Caco-2 (cell line): ENCODE measurements at regions of chr6 and their contacts with region 1.

Region 1: DNA sequence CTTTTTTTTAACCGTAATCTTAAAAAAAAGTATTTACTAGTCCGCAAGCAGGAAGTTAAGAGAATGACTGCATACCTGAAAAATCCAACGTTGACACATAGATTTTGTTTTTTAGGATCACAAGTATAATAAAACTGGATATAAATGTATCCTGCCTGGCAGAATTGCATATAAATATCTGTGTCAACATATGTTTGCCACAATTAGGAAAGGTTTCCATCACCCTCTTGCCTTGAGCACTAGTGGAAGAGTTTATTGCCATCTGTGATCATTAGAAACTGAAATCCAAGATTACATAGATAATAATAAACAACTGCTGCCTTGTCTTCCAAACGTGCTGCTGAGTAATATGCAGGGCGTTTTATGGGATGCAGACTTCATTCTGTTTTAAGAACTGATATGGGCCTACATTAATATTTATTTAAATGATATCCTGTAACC is 27.9 kb downstream of the PLEKHG1 start:
- DNase-seq: no peak
- H3K4me3 ChIP-seq: no peak overlapping the region
- H3K4me3 Mint-ChIP-seq: no peak overlapping the region
- H3K27ac Mint-ChIP-seq: peak overlapping the region; percentile 77
- H3K4me1 ChIP-seq: peaks cover 47% of the 10 kb centered on the region
- H3K4me1 Mint-ChIP-seq: peaks cover 41% of the 10 kb centered on the region
- H3K27me3 ChIP-seq: no peaks in the 10 kb centered on the region
- H3K27me3 Mint-ChIP-seq: no peaks in the 10 kb centered on the region
- CTCF ChIP-seq: no peak

Region 2: DNA sequence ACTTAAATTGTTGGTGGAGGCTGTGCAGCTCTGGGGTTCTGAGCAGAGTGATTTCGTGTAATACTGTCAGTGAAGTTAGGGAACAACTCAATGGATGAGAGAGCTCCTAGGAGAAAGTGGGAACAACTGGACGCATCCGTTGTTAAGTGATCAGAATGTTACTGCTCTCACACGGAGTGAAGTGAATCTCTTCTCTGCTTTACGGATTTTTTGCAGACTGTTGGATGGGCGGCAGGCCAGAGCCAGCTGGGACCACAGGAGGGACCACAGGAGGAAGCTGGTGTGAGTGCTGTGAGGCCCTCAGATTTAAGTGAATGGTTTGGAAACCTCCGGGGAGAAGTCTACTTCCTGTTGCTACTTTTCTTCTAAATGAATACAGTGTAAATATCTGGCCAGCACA is 508.4 kb before region 1 on chr6:
- CTCF ChIA-PET with region 1: no interaction called
- POLR2A ChIA-PET with region 1: no interaction called
- intact Hi-C with region 1: no loop called
- DNase-seq: no peak
- H3K4me3 ChIP-seq: no peak overlapping the region
- H3K4me3 Mint-ChIP-seq: no peak overlapping the region
- H3K27ac Mint-ChIP-seq: peak overlapping the region; percentile 73
- H3K4me1 ChIP-seq: peaks cover 16% of the 10 kb centered on the region; the same call in 1 of the 2 replicates
- H3K4me1 Mint-ChIP-seq: peaks cover 11% of the 10 kb centered on the region
- H3K27me3 ChIP-seq: no peaks in the 10 kb centered on the region
- H3K27me3 Mint-ChIP-seq: no peaks in the 10 kb centered on the region
- CTCF ChIP-seq: no peak

Region 3: GRCh38 chr6:150615967-150616366 is 11.6 kb before region 1 on chr6:
- CTCF ChIA-PET with region 1: no interaction called
- POLR2A ChIA-PET with region 1: no interaction called
- intact Hi-C with region 1: loop called (anchors 2 kb)
- DNase-seq: no peak
- H3K4me3 ChIP-seq: no peak overlapping the region
- H3K4me3 Mint-ChIP-seq: no peak overlapping the region
- H3K27ac Mint-ChIP-seq: no peak overlapping the region
- H3K4me1 ChIP-seq: peaks cover 49% of the 10 kb centered on the region
- H3K4me1 Mint-ChIP-seq: peaks cover 23% of the 10 kb centered on the region
- H3K27me3 ChIP-seq: no peaks in the 10 kb centered on the region
- H3K27me3 Mint-ChIP-seq: no peaks in the 10 kb centered on the region
- CTCF ChIP-seq: no peak

Region 4: DNA sequence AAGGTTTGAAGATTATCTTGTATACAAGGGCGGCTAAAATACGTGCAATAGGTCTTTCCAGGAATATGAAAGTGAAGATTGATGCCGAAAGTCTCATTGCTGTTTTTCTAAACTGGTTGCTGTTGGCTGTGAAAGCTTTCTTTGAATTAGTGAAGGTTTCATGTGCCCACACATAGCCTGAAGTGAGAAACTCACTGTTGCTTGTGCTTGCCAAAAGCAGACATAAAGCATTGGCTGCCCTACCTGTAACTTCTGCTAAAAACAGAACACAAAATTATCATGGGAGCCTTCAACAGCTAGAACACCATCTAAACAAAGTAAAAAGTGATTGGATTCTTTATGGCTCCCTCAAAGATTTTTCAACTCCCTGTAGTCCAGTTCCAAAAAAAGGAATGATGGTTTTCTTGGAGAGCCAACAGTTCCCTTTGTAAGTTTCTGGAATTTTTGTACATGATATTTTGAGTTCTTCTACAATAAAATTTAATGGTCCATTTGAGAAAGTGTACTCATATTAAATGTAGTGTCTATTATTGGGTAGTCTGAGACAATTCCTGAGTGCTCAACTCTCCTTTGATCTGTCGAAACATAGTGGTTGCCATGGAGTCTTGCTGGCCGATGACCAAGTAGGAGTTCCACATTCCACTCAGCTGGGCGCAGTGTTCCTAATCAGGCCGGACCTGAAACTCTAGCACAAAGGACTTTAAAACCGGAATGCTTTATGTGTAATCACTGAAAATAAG is 40.5 kb after region 1 on chr6:
- CTCF ChIA-PET with region 1: no interaction called
- POLR2A ChIA-PET with region 1: no interaction called
- intact Hi-C with region 1: loop called (anchors 5 kb)
- DNase-seq: peak; percentile 87 to 88
- H3K4me3 ChIP-seq: no peak overlapping the region
- H3K4me3 Mint-ChIP-seq: peak overlapping the region; percentile 29
- H3K27ac Mint-ChIP-seq: peak overlapping the region; percentile 95
- H3K4me1 ChIP-seq: peaks cover 22% of the 10 kb centered on the region
- H3K4me1 Mint-ChIP-seq: peaks cover 6% of the 10 kb centered on the region
- H3K27me3 ChIP-seq: no peaks in the 10 kb centered on the region
- H3K27me3 Mint-ChIP-seq: no peaks in the 10 kb centered on the region
- CTCF ChIP-seq: no peak

Region 5: DNA sequence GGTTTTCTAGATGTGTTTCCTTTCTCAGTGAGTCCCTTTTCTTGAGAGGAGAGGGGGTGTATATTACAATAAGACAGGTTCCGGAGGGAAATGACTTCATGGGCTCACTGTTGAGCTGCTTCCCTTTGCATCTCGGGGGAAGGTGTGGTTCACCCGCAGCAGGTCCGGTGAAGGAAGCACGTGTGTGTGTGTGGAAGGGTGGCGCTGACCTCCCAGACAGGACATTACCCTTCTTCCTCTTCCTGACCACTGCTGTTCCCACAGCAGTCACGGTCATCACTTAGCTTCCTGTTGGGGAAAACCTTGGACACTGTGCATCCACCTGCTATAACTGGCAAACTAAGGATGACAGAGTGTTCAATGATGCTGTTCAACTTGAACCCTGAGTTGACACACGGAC is 55.7 kb after region 1 on chr6:
- CTCF ChIA-PET with region 1: no interaction called
- POLR2A ChIA-PET with region 1: no interaction called
- intact Hi-C with region 1: no loop called
- DNase-seq: no peak
- H3K4me3 ChIP-seq: no peak overlapping the region
- H3K4me3 Mint-ChIP-seq: no peak overlapping the region
- H3K27ac Mint-ChIP-seq: no peak overlapping the region
- H3K4me1 ChIP-seq: peaks cover 14% of the 10 kb centered on the region
- H3K4me1 Mint-ChIP-seq: peaks cover 13% of the 10 kb centered on the region
- H3K27me3 ChIP-seq: no peaks in the 10 kb centered on the region
- H3K27me3 Mint-ChIP-seq: no peaks in the 10 kb centered on the region
- CTCF ChIP-seq: no peak